WTC11 (cell line): ENCODE measurements at regions of chr16 and their contacts with region 1.

Region 1: DNA sequence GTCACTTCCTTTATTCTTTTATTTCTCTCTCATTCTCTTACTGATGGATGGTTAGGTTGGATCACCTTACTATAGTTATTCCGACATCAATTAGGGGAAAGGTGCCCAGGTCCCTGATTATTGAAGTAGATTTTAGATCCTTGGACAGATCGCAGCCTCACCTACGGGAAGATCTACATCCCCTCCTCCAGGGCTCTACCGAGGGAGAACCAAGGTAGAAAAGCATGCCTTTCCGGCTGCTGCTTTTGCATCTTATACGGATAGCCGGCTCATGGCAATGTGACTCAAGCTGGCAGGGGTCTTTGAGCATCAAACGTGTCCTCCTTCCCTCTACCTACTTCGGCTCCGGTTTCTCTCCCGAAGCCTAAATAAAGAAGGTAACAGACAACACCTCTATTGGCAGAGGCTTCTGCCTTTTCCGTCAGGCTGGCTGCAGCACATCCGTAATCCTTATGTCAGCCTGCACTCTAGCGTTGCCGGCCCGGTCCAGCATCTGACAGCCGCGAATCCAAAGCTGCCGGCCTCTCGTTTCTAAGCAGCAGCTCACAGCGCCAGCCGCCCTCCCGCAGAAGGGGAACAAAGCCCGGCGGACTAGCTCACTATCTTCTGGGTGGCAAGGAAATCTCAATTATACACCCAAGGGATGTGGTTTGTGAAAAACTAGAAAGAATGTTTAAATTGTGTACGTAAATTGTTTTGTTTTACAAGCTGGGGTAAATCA is 46.9 kb downstream of the IRX6 start:
- DNase-seq: peak; percentile 73
- ATAC-seq: peak; percentile 97
- H3K4me3 Mint-ChIP-seq: peak overlapping the region; percentile 41
- H3K27ac Mint-ChIP-seq: no peak overlapping the region
- H3K4me1 Mint-ChIP-seq: peaks cover 17% of the 10 kb centered on the region
- H3K27me3 Mint-ChIP-seq: peaks cover 24% of the 10 kb centered on the region
- CTCF ChIP-seq: no peak

Region 2: GRCh38 chr16:55323637-55324490 is 47.1 kb before region 1 on chr16 and contains the start of gene IRX6:
- CTCF ChIA-PET with region 1: interaction called, 18 read pairs
- POLR2A ChIA-PET with region 1: no interaction called
- DNase-seq: peak; percentile 87
- ATAC-seq: peak; percentile 78
- H3K4me3 Mint-ChIP-seq: peak within 1 kb of the TSS; percentile 77
- H3K27ac Mint-ChIP-seq: no peak within 1 kb of the TSS
- H3K4me1 Mint-ChIP-seq: peaks cover 23% of the 10 kb centered on the region
- H3K27me3 Mint-ChIP-seq: peaks cover 88% of the 10 kb centered on the region
- CTCF ChIP-seq: peak; percentile 56
- total RNA-seq, gene IRX6: 0.14 to 0.23 TPM (median 0.22 TPM) in 3 replicates

Region 3: DNA sequence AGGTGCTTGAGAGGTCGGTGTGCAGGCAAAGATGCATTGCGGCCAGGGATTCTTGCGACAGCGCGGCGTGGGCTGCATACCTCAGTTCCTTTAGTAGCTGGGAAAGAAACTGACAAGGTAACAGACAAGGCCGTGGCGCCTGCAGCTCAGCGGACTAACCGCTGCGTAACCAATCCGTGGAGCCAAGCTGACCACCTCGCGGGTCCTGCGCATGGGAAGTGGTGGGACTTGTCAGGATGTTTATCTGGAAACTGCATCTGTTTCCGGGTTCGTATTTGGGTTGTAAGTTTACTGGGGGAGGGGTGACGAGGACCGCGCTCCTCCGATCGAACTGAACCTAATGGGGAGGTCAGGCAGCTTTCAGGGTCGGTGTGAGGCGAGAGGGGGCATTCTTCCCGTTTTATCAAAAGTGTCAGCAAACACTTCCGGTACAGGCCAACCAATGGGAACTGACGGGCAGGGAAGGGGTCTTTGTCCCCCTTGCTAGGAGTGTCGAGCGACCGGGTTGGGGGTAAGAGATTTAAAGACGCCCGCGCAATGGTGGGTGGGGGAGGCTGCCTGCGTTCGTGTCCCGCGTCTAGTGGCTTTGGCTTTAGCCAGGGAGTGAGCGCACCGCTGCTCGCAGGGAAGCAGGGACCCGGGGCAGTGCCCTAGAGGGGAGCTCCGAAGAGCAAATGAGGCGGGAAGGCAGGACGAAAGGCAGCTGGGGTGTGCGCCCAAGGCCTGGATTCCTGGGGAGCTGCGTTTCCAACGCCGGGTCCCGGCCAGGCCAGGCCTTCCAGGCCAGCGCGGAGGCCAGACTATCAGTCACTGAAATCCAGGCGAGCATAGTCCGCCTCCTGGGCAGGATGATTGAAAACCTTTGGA is 39.9 kb before region 1 on chr16:
- CTCF ChIA-PET with region 1: interaction called, 18 read pairs
- POLR2A ChIA-PET with region 1: no interaction called
- DNase-seq: peak; percentile 30
- ATAC-seq: peak; percentile 33
- H3K4me3 Mint-ChIP-seq: peak overlapping the region; percentile 77
- H3K27ac Mint-ChIP-seq: no peak overlapping the region
- H3K4me1 Mint-ChIP-seq: peaks cover 35% of the 10 kb centered on the region
- H3K27me3 Mint-ChIP-seq: peaks cover 99% of the 10 kb centered on the region
- CTCF ChIP-seq: no peak

Region 4: DNA sequence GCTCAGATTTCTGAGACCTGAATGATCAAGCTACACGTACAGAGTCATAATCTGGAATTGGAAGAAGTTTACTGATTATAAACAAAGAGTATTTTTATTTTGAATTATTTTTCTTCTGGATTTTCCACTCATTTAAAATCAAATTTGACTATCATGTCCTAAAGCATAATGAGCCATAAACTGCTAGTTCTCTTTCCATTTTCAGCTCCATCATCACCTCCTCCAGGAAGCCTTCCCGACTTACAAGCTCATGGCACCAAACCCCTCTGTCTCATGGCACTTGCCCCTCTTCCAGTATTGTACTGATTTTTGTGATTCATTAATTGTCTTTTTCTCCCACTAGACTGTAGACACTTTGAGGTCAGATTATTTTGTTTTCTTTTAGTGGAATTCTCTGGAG is 11.0 kb before region 1 on chr16:
- CTCF ChIA-PET with region 1: interaction called, 13 read pairs
- POLR2A ChIA-PET with region 1: no interaction called
- DNase-seq: no peak
- ATAC-seq: no peak
- H3K4me3 Mint-ChIP-seq: no peak overlapping the region
- H3K27ac Mint-ChIP-seq: no peak overlapping the region
- H3K4me1 Mint-ChIP-seq: no peaks in the 10 kb centered on the region
- H3K27me3 Mint-ChIP-seq: no peaks in the 10 kb centered on the region; the same call in 1 of the 2 replicates
- CTCF ChIP-seq: no peak